Activated naive CD4-positive, alpha-beta T cell treated with anti-CD3 and anti-CD28 coated beads for 36 hours (primary cell): ENCODE measurements at regions of chr2 and their contacts with region 1.

Region 1: GRCh38 chr2:231514103-231514950 is 15.9 kb downstream of the NMUR1 start:
- DNase-seq: peak; percentile 99
- H3K4me3 Mint-ChIP-seq: peak overlapping the region; percentile 95
- H3K27ac Mint-ChIP-seq: peak overlapping the region; percentile 92
- H3K4me1 Mint-ChIP-seq: peaks cover 13% of the 10 kb centered on the region
- H3K27me3 Mint-ChIP-seq: no peaks in the 10 kb centered on the region

Region 2: GRCh38 chr2:231342061-231342711 is 172.1 kb before region 1 on chr2:
- CTCF ChIA-PET with region 1: no interaction called
- intact Hi-C with region 1: no loop called
- DNase-seq: no peak
- H3K4me3 Mint-ChIP-seq: no peak overlapping the region
- H3K27ac Mint-ChIP-seq: no peak overlapping the region
- H3K4me1 Mint-ChIP-seq: no peaks in the 10 kb centered on the region
- H3K27me3 Mint-ChIP-seq: no peaks in the 10 kb centered on the region

Region 3: DNA sequence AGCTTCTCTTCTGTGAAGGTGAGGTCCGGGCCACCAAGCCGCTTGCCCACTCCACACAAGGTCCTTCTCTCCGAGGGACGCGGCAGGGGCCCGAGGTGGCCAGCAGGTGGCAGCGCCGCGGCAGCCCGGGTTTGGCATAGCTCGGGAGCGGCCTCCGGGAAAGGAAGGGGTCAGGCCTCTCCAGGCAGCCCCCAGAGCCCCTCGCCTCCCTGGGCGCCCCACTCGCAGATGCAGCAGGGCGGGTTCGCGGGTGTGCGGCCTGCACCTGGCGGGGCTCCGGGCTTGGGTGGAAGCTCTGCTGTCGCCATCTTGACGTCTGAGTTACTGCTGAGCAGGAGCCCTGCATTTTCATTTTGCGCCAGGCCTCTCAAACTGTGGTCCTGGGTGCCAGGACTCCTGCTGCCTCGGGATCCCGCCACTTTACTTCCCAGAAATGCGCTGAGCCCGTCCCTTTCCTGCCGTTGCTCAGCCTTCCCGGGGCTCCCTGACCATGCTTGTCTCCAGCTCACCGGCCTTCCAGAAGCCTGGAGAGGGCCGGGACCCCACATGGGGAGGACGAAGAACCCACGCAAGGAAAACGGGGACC is 31.4 kb before region 1 on chr2:
- CTCF ChIA-PET with region 1: interaction called, 7 read pairs
- intact Hi-C with region 1: loop called (anchors 1 kb)
- DNase-seq: peak; percentile 78
- H3K4me3 Mint-ChIP-seq: peak overlapping the region; percentile 83
- H3K27ac Mint-ChIP-seq: peak overlapping the region; percentile 89
- H3K4me1 Mint-ChIP-seq: peaks cover 13% of the 10 kb centered on the region
- H3K27me3 Mint-ChIP-seq: no peaks in the 10 kb centered on the region

Region 4: DNA sequence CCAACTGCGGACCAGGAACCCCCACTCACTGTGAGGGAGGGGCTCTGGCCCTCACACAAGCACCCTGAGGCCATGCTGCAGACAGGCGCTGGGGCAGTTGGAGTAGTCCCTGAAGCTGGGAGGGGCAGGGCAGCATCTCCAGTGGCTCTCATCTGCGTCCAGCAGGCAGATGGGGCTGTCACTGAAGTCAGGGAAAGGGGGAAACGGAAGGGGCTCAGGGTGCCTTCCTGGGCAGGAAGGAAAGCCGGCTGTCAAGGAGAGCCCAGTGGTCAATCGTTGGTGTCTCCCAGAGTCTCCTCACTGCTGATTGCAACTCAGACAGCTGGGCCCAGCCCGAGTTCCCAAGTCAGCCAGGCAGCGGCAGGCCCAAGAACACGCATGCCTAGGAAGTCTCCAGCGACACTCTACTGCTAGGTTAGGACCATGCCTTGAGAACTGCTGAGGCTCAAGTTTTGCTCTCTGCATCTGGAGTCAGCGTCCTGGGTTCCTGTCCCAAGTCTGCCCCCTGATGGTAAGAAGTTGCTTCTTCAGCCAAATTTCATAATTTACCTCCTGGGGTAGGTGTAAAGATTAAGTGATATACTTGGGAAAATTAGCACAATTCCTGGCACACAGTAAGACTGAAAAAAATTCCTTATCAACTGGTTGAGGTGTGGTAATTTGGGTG is 43.4 kb after region 1 on chr2:
- CTCF ChIA-PET with region 1: interaction called, 14 read pairs
- intact Hi-C with region 1: loop called (anchors 1 kb)
- DNase-seq: peak; percentile 63
- H3K4me3 Mint-ChIP-seq: no peak overlapping the region
- H3K27ac Mint-ChIP-seq: no peak overlapping the region
- H3K4me1 Mint-ChIP-seq: peaks cover 2% of the 10 kb centered on the region
- H3K27me3 Mint-ChIP-seq: no peaks in the 10 kb centered on the region

Region 5: DNA sequence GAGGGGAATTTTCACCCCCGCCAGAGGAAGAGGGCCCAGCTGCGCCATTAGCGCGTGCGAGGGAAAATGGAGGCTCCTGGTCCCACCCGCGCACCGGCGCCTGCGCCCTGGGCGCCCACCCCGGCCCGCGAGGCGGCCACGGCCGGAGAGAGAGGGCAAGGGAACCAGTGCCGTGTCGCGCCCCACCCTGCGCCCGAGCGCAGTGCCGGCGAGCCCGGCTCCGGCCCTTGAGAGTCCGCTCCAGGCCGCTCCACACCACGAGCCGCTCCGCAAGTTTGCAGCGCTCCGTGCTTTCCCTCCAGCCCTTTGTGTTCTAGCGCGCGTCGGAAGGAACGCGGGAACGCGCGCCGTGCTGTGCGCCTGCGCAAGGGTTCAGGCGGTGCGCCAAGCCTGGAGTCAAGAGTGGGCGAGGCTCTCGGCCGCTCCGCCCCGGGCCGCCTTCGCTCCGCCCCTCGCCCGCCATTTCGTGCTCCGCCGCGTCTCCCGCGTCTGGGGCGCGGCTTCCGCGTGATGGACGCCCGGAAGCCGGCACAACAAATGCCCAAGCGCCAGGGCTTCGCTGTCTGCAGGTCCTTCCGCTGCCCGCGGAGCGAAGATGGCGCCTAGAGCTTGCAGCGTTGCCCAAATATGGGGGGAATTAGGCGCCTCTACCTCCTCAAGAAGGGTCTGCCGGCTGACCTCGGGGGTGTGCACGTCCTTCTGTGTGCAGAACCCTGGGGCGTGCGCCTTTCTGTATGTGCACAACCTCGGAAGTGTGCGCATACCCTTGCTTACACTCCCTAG is 147.9 kb after region 1 on chr2:
- CTCF ChIA-PET with region 1: no interaction called
- intact Hi-C with region 1: loop called (anchors 1 kb)
- DNase-seq: peak; percentile 96
- H3K4me3 Mint-ChIP-seq: peak overlapping the region; percentile 74
- H3K27ac Mint-ChIP-seq: peak overlapping the region; percentile 92
- H3K4me1 Mint-ChIP-seq: peaks cover 17% of the 10 kb centered on the region
- H3K27me3 Mint-ChIP-seq: no peaks in the 10 kb centered on the region